ENCODE measurements at regions of chr19 and their contacts with region 1.

Region 1: GRCh38 chr19:12610540-12611360 is at the starts of genes ZNF490 and ZNF791:
- DNase-seq: peak; percentile 96
- H3K4me3 Mint-ChIP-seq: peak within 1 kb of the TSS; percentile 100
- H3K27ac Mint-ChIP-seq: peak within 1 kb of the TSS; percentile 99
- H3K4me1 Mint-ChIP-seq: peaks cover 22% of the 10 kb centered on the region
- H3K27me3 Mint-ChIP-seq: no peaks in the 10 kb centered on the region
- total RNA-seq, gene ZNF490: 9.2 and 9.4 TPM in 2 replicates
- total RNA-seq, gene ZNF791: 23.5 and 29.0 TPM in 2 replicates

Region 2: GRCh38 chr19:12333162-12334159 is 277.3 kb before region 1 on chr19 and contains the start of gene ZNF563:
- intact Hi-C with region 1: loop called (anchors 5 kb)
- DNase-seq: peak; percentile 96
- H3K4me3 Mint-ChIP-seq: peak within 1 kb of the TSS; percentile 96
- H3K27ac Mint-ChIP-seq: peak within 1 kb of the TSS; percentile 96
- H3K4me1 Mint-ChIP-seq: peaks cover 38% of the 10 kb centered on the region
- H3K27me3 Mint-ChIP-seq: no peaks in the 10 kb centered on the region
- total RNA-seq, gene ZNF563: 1.4 and 2.5 TPM in 2 replicates

Region 3: GRCh38 chr19:12465211-12465610 is 145.5 kb before region 1 on chr19:
- intact Hi-C with region 1: no loop called
- DNase-seq: no peak
- H3K4me3 Mint-ChIP-seq: no peak overlapping the region
- H3K27ac Mint-ChIP-seq: no peak overlapping the region
- H3K4me1 Mint-ChIP-seq: no peaks in the 10 kb centered on the region
- H3K27me3 Mint-ChIP-seq: no peaks in the 10 kb centered on the region

Region 4: DNA sequence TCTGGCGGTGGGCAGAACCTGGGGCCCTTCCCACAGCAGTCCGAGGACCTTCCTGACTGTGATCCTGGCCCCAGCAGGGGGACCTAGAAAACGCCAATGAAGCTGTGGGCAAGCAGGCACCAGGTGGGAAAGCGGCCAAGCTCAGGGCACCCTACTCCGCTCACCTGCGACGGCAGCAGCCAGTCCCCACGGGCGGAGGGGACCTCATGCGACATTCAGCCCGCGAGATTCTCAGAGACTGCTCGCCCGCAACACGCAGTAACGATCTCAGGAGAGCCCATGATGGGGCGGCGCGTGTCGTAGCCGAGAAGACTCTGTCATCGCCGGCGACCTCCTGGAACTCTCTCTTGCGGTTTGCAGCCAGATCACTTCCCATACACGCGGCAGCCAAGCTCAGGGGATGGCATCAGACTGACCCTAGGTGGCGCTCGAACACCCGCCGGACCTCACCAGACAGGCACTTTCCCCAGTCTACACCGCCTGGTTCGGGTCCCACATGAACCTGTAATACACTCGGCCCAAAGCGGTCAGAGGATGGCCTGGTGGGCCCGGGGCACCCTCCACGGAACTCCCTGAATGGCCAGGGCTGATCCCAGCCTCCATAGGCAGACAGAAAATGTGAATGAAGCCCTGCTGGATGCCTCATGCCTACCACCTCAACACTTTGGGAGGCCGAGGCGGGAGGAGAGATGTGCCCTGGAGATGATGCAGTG is 29.3 kb after region 1 on chr19:
- intact Hi-C with region 1: loop called (anchors 2 kb)
- DNase-seq: peak; percentile 72
- H3K4me3 Mint-ChIP-seq: peak overlapping the region; percentile 53
- H3K27ac Mint-ChIP-seq: peak overlapping the region; percentile 63
- H3K4me1 Mint-ChIP-seq: peaks cover 13% of the 10 kb centered on the region
- H3K27me3 Mint-ChIP-seq: no peaks in the 10 kb centered on the region

Region 5: GRCh38 chr19:12681074-12681951 is 70.6 kb after region 1 on chr19 and contains the start of gene DHPS:
- intact Hi-C with region 1: loop called (anchors 1 kb)
- DNase-seq: peak; percentile 89
- H3K4me3 Mint-ChIP-seq: peak within 1 kb of the TSS; percentile 86
- H3K27ac Mint-ChIP-seq: peak within 1 kb of the TSS; percentile 88
- H3K4me1 Mint-ChIP-seq: peaks cover 12% of the 10 kb centered on the region
- H3K27me3 Mint-ChIP-seq: no peaks in the 10 kb centered on the region
- total RNA-seq, gene DHPS: 144 and 147 TPM in 2 replicates